CD4-positive, alpha-beta T cell (primary cell): ENCODE measurements at regions of chr17 and their contacts with region 1.

Region 1: DNA sequence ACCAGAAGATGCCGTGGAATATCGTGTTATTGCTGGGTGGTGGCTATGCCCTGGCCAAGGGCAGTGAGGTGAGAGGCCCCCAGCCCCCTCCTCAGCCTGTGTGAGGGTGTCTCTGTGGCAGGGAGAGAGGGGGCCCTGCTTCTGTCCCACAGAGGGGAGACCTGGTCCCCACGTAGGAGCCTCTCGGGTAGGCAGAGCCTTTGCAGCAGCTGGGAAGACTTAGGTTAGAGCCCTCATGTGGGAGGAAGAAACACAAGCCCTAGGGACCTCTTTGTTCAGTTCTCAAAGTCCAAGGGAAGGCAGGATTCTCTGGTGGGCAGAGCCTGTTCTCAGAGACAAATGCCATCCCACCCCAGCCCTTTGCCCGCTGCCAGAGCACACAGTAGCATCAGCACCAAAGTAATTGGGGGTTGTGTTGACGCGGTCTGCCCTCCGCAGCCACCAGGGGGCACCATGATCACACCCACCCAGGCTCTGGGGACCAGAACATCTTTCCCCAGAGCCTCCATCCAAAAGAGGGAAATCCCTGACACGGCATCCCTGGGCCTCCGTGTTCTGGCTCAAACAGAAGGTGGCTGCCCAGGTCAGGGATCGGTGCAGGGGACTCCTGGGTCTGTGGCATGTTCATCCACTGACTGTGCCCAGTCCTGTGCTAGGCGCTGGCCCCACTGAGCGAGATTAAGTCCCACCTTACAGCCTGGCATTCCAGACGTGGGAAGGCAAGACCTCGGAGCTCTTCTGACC is 11.5 kb upstream of the FOXN1 start:
- DNase-seq: peak; percentile 65 to 87 (median 78)
- ATAC-seq: peak; percentile 89
- H3K4me3 ChIP-seq: no peak overlapping the region
- H3K4me3 Mint-ChIP-seq: no peak overlapping the region
- H3K27ac ChIP-seq: no peak overlapping the region
- H3K27ac Mint-ChIP-seq: no peak overlapping the region
- H3K4me1 ChIP-seq: no peaks in the 10 kb centered on the region
- H3K4me1 Mint-ChIP-seq: no peaks in the 10 kb centered on the region
- H3K27me3 ChIP-seq: peaks cover 0 to 6% of the 10 kb centered on the region in 2 experiments
- H3K27me3 Mint-ChIP-seq: no peaks in the 10 kb centered on the region
- CTCF ChIP-seq: peak; percentile 82

Region 2: DNA sequence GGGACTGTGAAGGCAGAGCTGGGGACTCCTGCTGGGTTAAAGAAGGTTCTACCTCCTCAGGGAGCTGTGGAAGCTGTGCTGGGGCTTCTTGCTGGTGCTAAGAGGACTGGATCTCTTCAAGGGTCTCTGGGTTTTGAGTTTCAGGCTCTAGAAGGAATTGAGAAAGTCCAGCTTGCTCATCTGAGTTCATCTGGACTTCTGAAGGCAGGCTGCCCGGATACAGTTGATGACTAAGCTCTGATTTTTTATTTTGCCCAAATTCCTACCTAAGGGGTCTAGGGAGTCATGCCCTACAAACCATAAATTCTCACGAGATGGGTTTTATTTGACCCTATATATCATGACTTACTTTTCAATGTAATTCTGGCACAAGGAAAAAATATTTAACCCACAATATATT is 222.5 kb before region 1 on chr17:
- CTCF ChIA-PET with region 1: no interaction called
- POLR2A ChIA-PET with region 1: no interaction called
- intact Hi-C with region 1: no loop called
- DNase-seq: no peak
- ATAC-seq: no peak
- H3K4me3 ChIP-seq: no peak overlapping the region
- H3K4me3 Mint-ChIP-seq: no peak overlapping the region
- H3K27ac ChIP-seq: no peak overlapping the region
- H3K27ac Mint-ChIP-seq: no peak overlapping the region
- H3K4me1 ChIP-seq: peaks cover 12% of the 10 kb centered on the region
- H3K4me1 Mint-ChIP-seq: peaks cover 7% of the 10 kb centered on the region
- H3K27me3 ChIP-seq: peaks cover 31 to 33% of the 10 kb centered on the region in 2 experiments
- H3K27me3 Mint-ChIP-seq: peaks cover 75% of the 10 kb centered on the region
- CTCF ChIP-seq: no peak

Region 3: DNA sequence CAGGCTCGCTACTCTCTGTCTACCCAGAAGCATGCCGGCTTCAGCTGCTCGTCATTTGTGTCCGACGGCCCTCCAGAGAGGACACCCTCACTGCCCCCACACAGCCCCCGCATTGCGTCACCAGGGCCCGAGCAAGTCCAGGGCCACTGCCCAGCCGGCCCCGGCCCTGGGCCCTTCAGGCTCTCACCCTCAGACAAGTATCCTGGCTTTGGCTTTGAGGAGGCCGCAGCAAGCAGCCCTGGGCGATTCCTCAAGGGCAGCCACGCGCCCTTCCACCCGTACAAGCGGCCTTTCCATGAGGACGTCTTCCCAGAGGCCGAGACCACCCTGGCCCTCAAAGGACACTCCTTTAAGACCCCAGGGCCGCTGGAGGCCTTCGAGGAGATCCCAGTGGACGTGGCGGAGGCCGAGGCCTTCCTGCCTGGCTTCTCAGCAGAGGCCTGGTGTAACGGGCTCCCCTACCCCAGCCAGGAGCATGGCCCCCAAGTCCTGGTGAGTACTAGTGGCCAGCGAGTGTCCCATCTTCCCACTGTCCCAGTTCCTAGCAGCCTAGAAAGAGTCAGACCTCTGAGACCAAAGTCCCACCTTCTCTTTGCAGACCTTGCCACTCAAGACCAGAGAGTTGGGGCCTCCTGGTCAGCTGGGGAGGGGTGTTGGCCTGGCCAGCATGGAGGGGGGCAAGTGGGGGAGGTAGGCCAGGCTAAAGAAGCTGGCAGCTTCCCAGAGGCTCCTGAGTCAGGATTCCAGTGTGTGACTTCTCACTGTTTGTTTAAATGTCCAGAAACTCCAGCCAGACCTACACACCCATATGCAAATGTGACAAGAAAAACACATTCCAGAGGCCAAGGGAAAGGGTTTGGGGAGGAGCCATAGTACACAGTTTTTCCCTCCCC is 30.1 kb after region 1 on chr17:
- CTCF ChIA-PET with region 1: no interaction called
- POLR2A ChIA-PET with region 1: no interaction called
- intact Hi-C with region 1: no loop called
- DNase-seq: no peak
- ATAC-seq: no peak
- H3K4me3 ChIP-seq: no peak overlapping the region
- H3K4me3 Mint-ChIP-seq: no peak overlapping the region
- H3K27ac ChIP-seq: no peak overlapping the region
- H3K27ac Mint-ChIP-seq: no peak overlapping the region
- H3K4me1 ChIP-seq: no peaks in the 10 kb centered on the region
- H3K4me1 Mint-ChIP-seq: no peaks in the 10 kb centered on the region
- H3K27me3 ChIP-seq: no peaks in the 10 kb centered on the region
- H3K27me3 Mint-ChIP-seq: no peaks in the 10 kb centered on the region
- CTCF ChIP-seq: no peak

Region 4: DNA sequence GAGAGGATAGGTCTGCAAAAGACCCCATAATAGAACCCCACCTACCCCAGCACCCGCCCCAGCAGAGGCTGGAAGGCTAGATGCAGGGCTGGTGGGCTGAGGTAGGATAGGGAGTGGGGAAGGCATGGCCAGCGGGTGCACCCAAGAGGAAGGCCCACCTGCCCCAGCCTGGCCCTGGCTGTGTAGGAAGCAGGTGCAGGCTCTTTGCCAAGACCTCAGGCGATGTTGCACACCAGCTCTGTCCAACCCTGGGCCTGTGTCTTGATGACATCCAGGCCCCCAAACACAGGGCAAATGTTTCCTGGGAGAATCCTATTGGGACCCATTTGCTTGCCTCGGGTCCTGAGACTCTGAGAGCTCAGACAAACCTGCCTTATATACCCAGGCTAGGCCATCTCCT is 45.6 kb after region 1 on chr17:
- CTCF ChIA-PET with region 1: interaction called, 3 read pairs
- POLR2A ChIA-PET with region 1: no interaction called
- intact Hi-C with region 1: loop called (anchors 1 to 2 kb)
- DNase-seq: no peak
- ATAC-seq: no peak
- H3K4me3 ChIP-seq: no peak overlapping the region
- H3K4me3 Mint-ChIP-seq: no peak overlapping the region
- H3K27ac ChIP-seq: no peak overlapping the region
- H3K27ac Mint-ChIP-seq: no peak overlapping the region
- H3K4me1 ChIP-seq: no peaks in the 10 kb centered on the region
- H3K4me1 Mint-ChIP-seq: no peaks in the 10 kb centered on the region
- H3K27me3 ChIP-seq: no peaks in the 10 kb centered on the region
- H3K27me3 Mint-ChIP-seq: no peaks in the 10 kb centered on the region
- CTCF ChIP-seq: no peak

Region 5: DNA sequence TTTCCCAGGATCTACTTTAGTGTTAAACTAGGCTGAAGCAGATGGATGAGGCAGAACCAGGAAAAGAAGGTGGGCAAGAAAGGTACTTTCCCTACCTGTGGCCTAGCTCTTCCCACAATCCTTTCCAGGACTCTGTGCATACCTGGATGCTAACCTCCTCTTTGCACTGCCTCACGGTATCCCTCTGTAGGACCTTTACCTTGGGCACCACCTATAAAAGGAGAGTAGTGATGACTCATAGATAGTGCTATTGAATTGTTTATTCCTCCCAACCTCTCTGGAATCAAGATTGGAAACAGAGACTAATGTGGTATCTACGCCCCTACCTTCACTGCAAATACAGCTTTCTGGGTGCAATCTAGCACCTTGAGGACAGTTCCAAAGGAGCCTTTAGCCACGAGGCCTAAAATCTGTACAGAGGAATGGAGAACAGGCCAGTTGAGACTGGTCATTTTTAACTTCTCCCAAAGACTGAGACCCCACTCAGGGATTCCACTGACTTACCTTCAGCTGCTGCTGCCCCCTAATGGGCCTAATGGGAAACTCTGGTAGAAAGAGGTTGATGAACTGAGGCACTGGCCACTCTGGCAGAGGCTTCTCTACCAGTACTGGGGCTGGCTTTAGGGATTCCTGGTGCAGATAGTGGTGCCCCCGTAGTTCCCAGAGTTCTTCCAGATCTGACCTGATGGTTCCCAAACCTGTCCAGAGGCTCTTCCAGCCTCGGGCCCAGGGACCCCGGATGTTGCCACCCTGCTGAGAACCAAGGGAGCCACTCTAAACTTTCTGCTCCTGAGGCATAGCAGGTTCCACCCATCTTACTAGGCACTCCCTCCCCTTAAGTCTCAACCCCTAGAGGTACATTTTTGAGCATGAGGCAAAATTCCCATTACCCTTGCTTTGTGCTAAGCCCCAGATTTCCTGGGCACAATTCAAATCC is 118.6 kb after region 1 on chr17:
- CTCF ChIA-PET with region 1: interaction called, 9 read pairs
- POLR2A ChIA-PET with region 1: no interaction called
- intact Hi-C with region 1: loop called (anchors 1 kb)
- DNase-seq: peak; percentile 16 to 66 (median 26)
- ATAC-seq: peak; percentile 49
- H3K4me3 ChIP-seq: no peak overlapping the region
- H3K4me3 Mint-ChIP-seq: no peak overlapping the region
- H3K27ac ChIP-seq: no peak overlapping the region
- H3K27ac Mint-ChIP-seq: peak overlapping the region; percentile 34
- H3K4me1 ChIP-seq: no peaks in the 10 kb centered on the region
- H3K4me1 Mint-ChIP-seq: peaks cover 5% of the 10 kb centered on the region
- H3K27me3 ChIP-seq: no peaks in the 10 kb centered on the region
- H3K27me3 Mint-ChIP-seq: no peaks in the 10 kb centered on the region
- CTCF ChIP-seq: peak; percentile 86